ENCODE measurements at regions of chr7 and their contacts with region 1.

Region 1: GRCh38 chr7:13279854-13280435 is 592.5 kb downstream of the ARL4A start:
- DNase-seq: no peak
- ATAC-seq: no peak
- H3K4me3 ChIP-seq: no peak overlapping the region
- H3K27ac ChIP-seq: no peak overlapping the region
- H3K4me1 ChIP-seq: no peaks in the 10 kb centered on the region
- H3K27me3 ChIP-seq: no peaks in the 10 kb centered on the region
- CTCF ChIP-seq: peak; percentile 46

Region 2: DNA sequence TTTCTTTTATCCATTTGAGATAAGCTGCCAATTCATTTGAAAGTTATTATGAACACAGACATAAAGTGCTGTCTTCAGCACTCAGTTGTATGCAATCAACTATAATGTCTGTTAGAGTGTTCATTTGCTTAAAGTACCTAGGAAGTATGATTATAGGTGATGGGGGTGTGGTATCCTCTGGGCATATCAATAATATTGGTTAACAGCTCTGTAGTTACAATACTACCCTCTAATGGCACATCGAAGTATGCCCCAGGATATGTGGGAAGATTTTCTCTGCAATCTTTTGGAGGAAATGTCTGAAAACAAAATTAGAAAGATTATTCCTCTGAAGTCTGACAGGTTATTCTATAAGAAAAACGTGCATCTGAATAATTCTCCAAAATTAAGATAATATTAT is 162.8 kb before region 1 on chr7:
- intact Hi-C with region 1: no loop called
- DNase-seq: no peak
- ATAC-seq: no peak
- H3K4me3 ChIP-seq: no peak overlapping the region
- H3K27ac ChIP-seq: no peak overlapping the region
- H3K4me1 ChIP-seq: no peaks in the 10 kb centered on the region
- H3K27me3 ChIP-seq: no peaks in the 10 kb centered on the region
- CTCF ChIP-seq: no peak

Region 3: GRCh38 chr7:13359656-13360055 is 79.7 kb after region 1 on chr7:
- intact Hi-C with region 1: no loop called
- DNase-seq: no peak
- ATAC-seq: no peak
- H3K4me3 ChIP-seq: no peak overlapping the region
- H3K27ac ChIP-seq: no peak overlapping the region
- H3K4me1 ChIP-seq: no peaks in the 10 kb centered on the region
- H3K27me3 ChIP-seq: no peaks in the 10 kb centered on the region
- CTCF ChIP-seq: no peak

Region 4: GRCh38 chr7:13508586-13508985 is 228.6 kb after region 1 on chr7:
- intact Hi-C with region 1: no loop called
- DNase-seq: no peak
- ATAC-seq: no peak
- H3K4me3 ChIP-seq: no peak overlapping the region
- H3K27ac ChIP-seq: no peak overlapping the region
- H3K4me1 ChIP-seq: no peaks in the 10 kb centered on the region
- H3K27me3 ChIP-seq: no peaks in the 10 kb centered on the region
- CTCF ChIP-seq: no peak

Region 5: DNA sequence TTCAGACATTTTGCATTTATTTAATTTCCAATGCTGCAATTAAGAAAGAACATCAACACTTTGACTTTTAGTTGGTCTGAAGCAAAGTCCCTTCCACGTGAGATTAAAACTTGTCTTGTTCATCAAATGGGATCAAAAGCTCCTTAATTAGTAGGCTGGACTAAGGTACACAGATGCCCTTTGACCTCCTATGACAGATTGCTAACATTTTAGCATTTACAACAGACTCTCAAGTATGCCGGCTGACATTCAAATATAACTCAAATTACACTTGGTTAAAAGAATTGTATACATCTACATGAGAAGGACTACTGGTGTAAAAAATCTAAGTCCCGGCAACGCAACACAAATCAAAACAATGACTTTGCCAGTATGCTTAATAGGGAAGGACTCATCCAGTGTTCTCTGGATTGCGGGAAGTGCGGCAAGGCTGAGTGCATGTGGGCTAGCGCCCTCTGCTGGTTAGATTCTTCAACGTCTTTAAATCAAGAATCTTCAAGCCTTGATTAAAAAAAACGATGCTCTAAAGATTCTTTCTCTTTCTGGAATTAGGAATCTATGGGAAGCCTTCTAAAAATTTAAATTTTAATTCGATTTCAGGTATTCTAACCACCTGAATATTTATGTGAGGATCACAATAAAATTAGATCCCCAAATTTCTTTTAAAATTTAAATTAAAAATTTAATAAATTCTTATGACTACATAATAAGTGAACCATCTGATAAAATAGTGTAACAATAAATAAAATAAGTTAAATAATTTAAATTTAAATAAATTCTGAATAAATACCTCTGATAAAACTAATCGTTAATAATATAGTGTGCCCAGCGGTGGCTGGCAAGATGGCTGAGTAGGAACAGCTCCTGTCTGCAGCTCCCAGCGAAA is 1177.9 kb after region 1 on chr7:
- intact Hi-C with region 1: loop called (anchors 5 kb)
- DNase-seq: peak; percentile 57
- ATAC-seq: peak; percentile 87 to 90
- H3K4me3 ChIP-seq: no peak overlapping the region
- H3K27ac ChIP-seq: no peak overlapping the region
- H3K4me1 ChIP-seq: no peaks in the 10 kb centered on the region
- H3K27me3 ChIP-seq: no peaks in the 10 kb centered on the region
- CTCF ChIP-seq: peak; percentile 78

Region 6: GRCh38 chr7:14691597-14692203 is 1411.8 kb after region 1 on chr7:
- intact Hi-C with region 1: loop called (anchors 5 kb)
- DNase-seq: no peak
- ATAC-seq: no peak
- H3K4me3 ChIP-seq: no peak overlapping the region
- H3K27ac ChIP-seq: no peak overlapping the region
- H3K4me1 ChIP-seq: no peaks in the 10 kb centered on the region
- H3K27me3 ChIP-seq: no peaks in the 10 kb centered on the region
- CTCF ChIP-seq: peak; percentile 82